HCT116 (cell line): ENCODE measurements at regions of chr5 and their contacts with region 1.

Region 1: GRCh38 chr5:77015938-77016569 is 14.2 kb upstream of the AGGF1 start:
- DNase-seq: peak; percentile 57
- ATAC-seq: peak; percentile 81
- H3K4me3 ChIP-seq: no peak overlapping the region
- H3K27ac ChIP-seq: no peak overlapping the region
- H3K4me1 ChIP-seq: peaks cover 0 to 5% of the 10 kb centered on the region in 2 experiments; a peak in 1 of 4 replicates
- H3K27me3 ChIP-seq: no peaks in the 10 kb centered on the region
- CTCF ChIP-seq: peak; percentile 26 to 77 (median 59); a peak in 5 of 6 replicates
- POLR2A ChIP-seq: no peak
- RAD21 ChIP-seq: peak; percentile 81

Region 2: DNA sequence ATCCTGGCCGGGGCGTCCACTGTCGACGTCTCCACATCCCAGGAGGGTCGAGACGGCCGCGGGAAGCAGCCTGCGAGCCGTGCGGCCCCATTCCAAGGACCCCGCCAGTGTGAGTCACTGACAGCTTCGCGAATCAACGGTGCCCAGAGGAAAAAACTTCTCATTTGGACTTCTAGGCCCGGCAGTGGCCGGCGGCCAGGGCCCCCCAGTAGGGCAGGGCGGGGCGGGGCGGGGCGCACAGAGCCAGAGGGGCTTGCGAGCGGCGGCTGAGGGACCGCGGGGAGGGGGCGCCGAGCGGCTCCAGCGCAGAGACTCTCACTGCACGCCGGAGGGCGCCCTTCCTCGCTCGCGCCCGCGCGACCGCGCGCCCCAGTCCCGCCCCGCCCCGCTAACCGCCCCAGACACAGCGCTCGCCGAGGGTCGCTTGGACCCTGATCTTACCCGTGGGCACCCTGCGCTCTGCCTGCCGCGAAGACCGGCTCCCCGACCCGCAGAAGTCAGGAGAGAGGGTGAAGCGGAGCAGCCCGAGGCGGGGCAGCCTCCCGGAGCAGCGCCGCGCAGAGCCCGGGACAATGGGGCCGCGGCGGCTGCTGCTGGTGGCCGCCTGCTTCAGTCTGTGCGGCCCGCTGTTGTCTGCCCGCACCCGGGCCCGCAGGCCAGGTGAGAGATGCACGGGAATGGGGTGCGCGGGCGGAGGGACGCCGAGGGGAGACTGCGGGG is 300.2 kb before region 1 on chr5 and contains the start of gene F2R:
- CTCF ChIA-PET with region 1: no interaction called
- POLR2A ChIA-PET with region 1: no interaction called
- RAD21 ChIA-PET with region 1: no interaction called
- intact Hi-C with region 1: loop called (anchors 1 kb)
- DNase-seq: no peak
- ATAC-seq: peak; percentile 92
- H3K4me3 ChIP-seq: peak within 1 kb of the TSS; percentile 66 to 83
- H3K27ac ChIP-seq: peak within 1 kb of the TSS; percentile 65; the same call in 1 of the 2 replicates
- H3K4me1 ChIP-seq: peaks cover 5 to 23% of the 10 kb centered on the region in 2 experiments; a peak in 3 of 4 replicates
- H3K27me3 ChIP-seq: no peaks in the 10 kb centered on the region
- CTCF ChIP-seq: peak; percentile 31 to 49 (median 44); a peak in 4 of 6 replicates
- POLR2A ChIP-seq: no peak
- RAD21 ChIP-seq: peak; percentile 58
- total RNA-seq, gene F2R: 16.6 TPM

Region 3: GRCh38 chr5:76867827-76868693 is 148.0 kb before region 1 on chr5:
- CTCF ChIA-PET with region 1: interaction called, 57 read pairs
- POLR2A ChIA-PET with region 1: interaction called, 4 read pairs
- RAD21 ChIA-PET with region 1: no interaction called
- intact Hi-C with region 1: loop called (anchors 1 kb)
- DNase-seq: peak; percentile 63
- ATAC-seq: peak; percentile 89
- H3K4me3 ChIP-seq: no peak overlapping the region
- H3K27ac ChIP-seq: no peak overlapping the region
- H3K4me1 ChIP-seq: peaks cover 0 to 11% of the 10 kb centered on the region in 2 experiments; a peak in 3 of 4 replicates
- H3K27me3 ChIP-seq: no peaks in the 10 kb centered on the region
- CTCF ChIP-seq: peak; percentile 78 to 88 (median 82)
- POLR2A ChIP-seq: no peak
- RAD21 ChIP-seq: peak; percentile 89